Panc1 (cell line): ENCODE measurements at regions of chr6 and their contacts with region 1.

Region 1: GRCh38 chr6:148947621-148948444 is 201.0 kb downstream of the UST start:
- DNase-seq: peak; percentile 55
- ATAC-seq: peak; percentile 97
- H3K4me3 ChIP-seq: no peak overlapping the region
- H3K27ac ChIP-seq: no peak overlapping the region
- H3K4me1 ChIP-seq: no peaks in the 10 kb centered on the region
- H3K27me3 ChIP-seq: peaks cover 8% of the 10 kb centered on the region
- CTCF ChIP-seq: peak; percentile 89

Region 2: DNA sequence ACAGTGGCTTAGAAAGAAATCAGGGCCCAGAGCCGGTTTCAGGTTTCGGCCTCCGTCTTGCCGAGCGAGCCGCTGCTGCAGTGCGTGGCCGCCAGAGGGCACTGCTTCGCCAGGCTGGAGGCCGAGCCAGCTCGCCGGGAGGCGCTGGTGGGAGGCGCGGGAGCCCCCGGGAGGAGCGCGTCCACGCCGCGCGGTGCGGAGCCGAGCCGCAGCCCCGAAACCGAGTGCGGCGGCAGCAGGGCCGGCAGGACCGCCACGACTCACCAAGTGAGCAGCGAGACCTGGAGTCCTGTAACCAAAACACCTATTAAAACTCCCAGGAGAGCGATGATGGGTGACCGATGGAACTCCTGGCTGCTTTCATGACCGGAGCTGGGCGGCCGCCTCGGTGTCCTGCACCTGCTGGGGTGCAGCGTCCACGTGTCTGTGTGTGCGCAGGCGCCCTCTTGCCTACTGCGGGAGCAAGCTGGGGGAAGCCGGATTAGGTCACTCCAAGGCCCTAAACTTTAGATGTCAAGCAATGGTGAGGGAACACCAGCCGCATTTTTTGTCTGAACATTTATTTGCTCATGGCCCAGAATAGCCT is 387.9 kb before region 1 on chr6:
- CTCF ChIA-PET with region 1: no interaction called
- POLR2A ChIA-PET with region 1: no interaction called
- in situ Hi-C with region 1: no loop called
- intact Hi-C with region 1: loop called (anchors 1 kb)
- DNase-seq: no peak
- ATAC-seq: peak; percentile 90
- H3K4me3 ChIP-seq: peak overlapping the region; percentile 36 to 46
- H3K27ac ChIP-seq: no peak overlapping the region
- H3K4me1 ChIP-seq: peaks cover 3% of the 10 kb centered on the region; the same call in 1 of the 2 replicates
- H3K27me3 ChIP-seq: no peaks in the 10 kb centered on the region
- CTCF ChIP-seq: peak; percentile 99

Region 3: DNA sequence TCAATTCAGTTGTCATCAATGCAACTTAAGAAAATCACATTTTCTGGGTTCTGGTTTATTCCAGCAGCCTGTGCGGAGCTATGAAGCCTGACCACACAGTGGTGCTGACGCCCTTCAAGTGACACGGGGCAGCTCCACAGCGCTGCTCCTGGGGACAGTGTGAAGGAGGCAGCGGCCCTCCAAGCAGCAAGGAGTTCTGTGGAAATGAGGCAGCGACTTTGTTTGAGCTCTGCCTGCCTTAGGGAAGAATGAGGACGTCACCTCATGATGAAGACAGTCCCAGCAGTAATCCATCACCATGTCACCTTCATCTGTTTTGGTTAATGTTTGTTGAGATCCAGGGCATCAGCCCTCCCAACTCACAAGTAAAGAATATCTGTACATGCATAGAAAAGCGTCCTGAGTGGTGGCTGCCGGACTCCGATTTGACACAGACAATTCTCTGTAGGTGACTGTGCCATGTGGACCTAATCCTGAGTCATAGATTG is 369.5 kb before region 1 on chr6:
- CTCF ChIA-PET with region 1: interaction called, 12 read pairs
- POLR2A ChIA-PET with region 1: no interaction called
- in situ Hi-C with region 1: no loop called
- intact Hi-C with region 1: loop called (anchors 1 kb)
- DNase-seq: peak; percentile 51
- ATAC-seq: peak; percentile 100
- H3K4me3 ChIP-seq: no peak overlapping the region
- H3K27ac ChIP-seq: no peak overlapping the region
- H3K4me1 ChIP-seq: no peaks in the 10 kb centered on the region
- H3K27me3 ChIP-seq: peaks cover 4% of the 10 kb centered on the region; the same call in 1 of the 2 replicates
- CTCF ChIP-seq: peak; percentile 92

Region 4: DNA sequence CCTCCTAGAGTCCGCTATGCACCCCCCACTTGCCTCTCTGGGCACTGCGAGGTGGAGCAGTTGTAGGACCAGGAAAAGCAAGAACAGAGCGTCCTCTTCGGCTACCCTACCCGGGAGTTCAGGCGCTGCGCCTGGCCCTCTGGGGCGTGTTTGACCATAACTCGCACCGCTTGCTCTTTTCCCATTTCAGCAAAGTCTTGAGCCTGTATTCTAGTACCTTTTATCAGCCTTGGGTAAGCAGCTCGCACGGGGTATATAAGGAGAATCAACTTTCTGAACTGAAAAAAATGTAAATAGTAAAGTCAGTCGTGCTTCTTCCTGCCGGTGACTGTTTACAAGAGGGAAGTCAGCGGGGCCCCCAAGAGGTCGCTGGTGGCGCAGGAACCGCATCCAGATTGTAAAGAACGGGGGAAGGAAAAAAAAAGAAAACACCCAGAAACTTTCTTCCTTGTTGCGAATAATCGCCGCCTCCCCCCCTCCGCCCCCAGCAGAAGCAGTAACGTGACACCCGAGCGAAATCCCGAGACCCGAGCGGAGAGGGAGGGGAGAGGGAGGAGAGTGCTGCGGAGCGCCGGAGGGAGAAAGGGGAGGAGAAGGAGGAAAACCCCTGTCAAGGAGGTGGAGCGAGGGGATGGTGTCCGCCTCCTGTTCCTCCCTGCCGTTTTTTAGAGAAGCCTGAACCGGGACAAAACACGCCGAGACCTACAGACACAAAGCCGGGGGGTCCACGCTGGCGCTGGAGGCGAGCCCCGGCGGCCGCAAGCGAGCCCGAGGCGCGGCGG is 201.3 kb before region 1 on chr6 and contains the start of gene UST:
- CTCF ChIA-PET with region 1: no interaction called
- POLR2A ChIA-PET with region 1: no interaction called
- in situ Hi-C with region 1: no loop called
- intact Hi-C with region 1: loop called (anchors 10 kb)
- DNase-seq: no peak
- ATAC-seq: peak; percentile 90
- H3K4me3 ChIP-seq: peak within 1 kb of the TSS; percentile 46 to 64
- H3K27ac ChIP-seq: no peak within 1 kb of the TSS
- H3K4me1 ChIP-seq: peaks cover 5% of the 10 kb centered on the region
- H3K27me3 ChIP-seq: peaks cover 42% of the 10 kb centered on the region
- CTCF ChIP-seq: peak; percentile 52
- total RNA-seq, gene UST: 0.15 TPM